ENCODE measurements at regions of chr3 and their contacts with region 1.

Region 1: DNA sequence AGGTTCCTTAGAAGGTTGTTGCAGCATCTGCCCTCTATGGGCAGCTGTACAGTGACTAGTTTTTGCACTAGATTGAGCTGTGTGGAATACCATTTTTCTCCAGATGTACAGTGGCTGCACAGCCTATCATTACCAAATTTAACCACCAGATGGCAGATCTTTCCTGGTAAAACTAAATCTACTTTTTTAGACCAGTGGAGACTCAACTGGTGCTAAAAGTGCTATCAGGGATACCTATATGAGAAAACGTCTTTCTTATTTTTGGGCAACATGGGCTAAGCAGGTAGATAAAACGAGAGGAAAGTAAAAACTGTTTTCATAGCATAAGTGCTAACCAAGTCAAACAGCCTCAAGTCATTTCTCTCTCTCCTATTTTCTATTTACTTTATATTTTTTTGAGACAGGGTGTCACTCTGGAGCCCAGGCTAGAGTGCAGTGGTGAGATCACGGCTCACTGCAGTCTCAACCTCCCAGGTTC is 21.2 kb downstream of the IGSF10 start:
- DNase-seq: no peak
- H3K4me3 ChIP-seq: no peak overlapping the region
- H3K27ac ChIP-seq: no peak overlapping the region
- H3K4me1 ChIP-seq: peaks cover 0 to 4% (median 0%) of the 10 kb centered on the region in 4 experiments; a peak in 1 of 7 replicates
- H3K27me3 ChIP-seq: no peaks in the 10 kb centered on the region
- CTCF ChIP-seq: peak in 2 of 3 experiments; percentile 58 to 66; a peak in 3 of 4 replicates
- EP300 ChIP-seq: no peak
- POLR2A ChIP-seq: no peak
- RAD21 ChIP-seq: peak; percentile 82 to 83

Region 2: GRCh38 chr3:151425627-151426335 is 13.9 kb before region 1 on chr3:
- CTCF ChIA-PET with region 1: interaction called, 48 read pairs
- POLR2A ChIA-PET with region 1: no interaction called
- DNase-seq: no peak
- H3K4me3 ChIP-seq: no peak overlapping the region
- H3K27ac ChIP-seq: no peak overlapping the region
- H3K4me1 ChIP-seq: peaks cover 0 to 11% (median 7%) of the 10 kb centered on the region in 4 experiments; a peak in 4 of 7 replicates
- H3K27me3 ChIP-seq: no peaks in the 10 kb centered on the region
- CTCF ChIP-seq: no peak; a peak in 1 of 4 replicates
- EP300 ChIP-seq: no peak
- POLR2A ChIP-seq: no peak
- RAD21 ChIP-seq: no peak

Region 3: DNA sequence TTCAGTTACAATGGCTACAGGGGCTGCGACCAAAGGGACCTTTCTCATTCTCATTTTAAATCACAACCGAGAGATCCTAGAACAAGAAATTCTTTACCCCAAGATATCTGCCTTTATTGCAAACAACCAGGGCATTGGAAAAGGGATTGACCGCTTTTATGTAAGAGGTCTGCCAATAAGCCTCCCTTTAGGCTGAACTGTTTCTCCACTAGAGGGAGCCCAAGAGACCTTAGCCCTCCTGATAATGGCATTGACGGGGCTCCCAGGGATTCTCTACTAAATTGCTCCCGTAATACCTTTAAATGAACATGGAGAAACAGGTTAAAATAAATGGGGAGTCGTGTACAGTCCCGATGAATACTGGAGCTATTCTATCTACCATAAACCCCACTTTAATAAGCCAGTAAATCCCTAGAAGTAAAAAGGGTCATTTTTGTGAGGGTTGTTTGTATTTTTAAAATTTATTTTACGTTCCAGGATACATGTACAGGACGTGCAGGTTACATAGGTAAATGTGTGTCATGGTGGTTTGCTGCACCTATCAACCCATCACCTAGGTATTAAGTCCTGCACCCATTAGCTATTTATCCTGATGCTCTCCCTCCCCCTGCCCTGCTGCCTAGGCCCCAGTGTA is 28.7 kb after region 1 on chr3:
- CTCF ChIA-PET with region 1: interaction called, 23 read pairs
- POLR2A ChIA-PET with region 1: no interaction called
- DNase-seq: peak; percentile 36 to 58
- H3K4me3 ChIP-seq: no peak overlapping the region
- H3K27ac ChIP-seq: no peak overlapping the region
- H3K4me1 ChIP-seq: no peaks in the 10 kb centered on the region
- H3K27me3 ChIP-seq: no peaks in the 10 kb centered on the region
- CTCF ChIP-seq: peak; percentile 36 to 81 (median 68)
- EP300 ChIP-seq: no peak
- POLR2A ChIP-seq: no peak
- RAD21 ChIP-seq: peak; percentile 79 to 83

Region 4: DNA sequence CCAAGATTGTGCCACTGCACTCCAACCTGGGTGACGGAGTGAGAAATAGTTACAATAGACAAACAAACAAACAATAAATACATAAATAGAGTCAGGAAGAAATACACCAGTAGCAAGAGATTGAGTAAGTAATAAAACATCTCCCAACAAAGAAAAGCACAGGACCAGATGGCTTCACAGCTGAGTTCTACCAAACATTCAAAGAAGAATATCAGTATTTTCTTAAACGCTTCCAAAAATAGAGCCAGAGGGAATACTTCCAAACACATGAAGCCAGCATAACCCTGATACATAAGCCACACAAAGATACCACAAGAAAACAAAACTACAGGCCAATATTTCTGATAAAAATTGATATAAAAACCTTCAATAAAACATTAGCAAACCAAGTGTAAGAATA is 51.8 kb after region 1 on chr3:
- CTCF ChIA-PET with region 1: no interaction called
- POLR2A ChIA-PET with region 1: no interaction called
- DNase-seq: no peak
- H3K4me3 ChIP-seq: no peak overlapping the region
- H3K27ac ChIP-seq: no peak overlapping the region
- H3K4me1 ChIP-seq: no peaks in the 10 kb centered on the region
- H3K27me3 ChIP-seq: no peaks in the 10 kb centered on the region
- CTCF ChIP-seq: no peak
- EP300 ChIP-seq: no peak
- POLR2A ChIP-seq: no peak
- RAD21 ChIP-seq: no peak

Region 5: DNA sequence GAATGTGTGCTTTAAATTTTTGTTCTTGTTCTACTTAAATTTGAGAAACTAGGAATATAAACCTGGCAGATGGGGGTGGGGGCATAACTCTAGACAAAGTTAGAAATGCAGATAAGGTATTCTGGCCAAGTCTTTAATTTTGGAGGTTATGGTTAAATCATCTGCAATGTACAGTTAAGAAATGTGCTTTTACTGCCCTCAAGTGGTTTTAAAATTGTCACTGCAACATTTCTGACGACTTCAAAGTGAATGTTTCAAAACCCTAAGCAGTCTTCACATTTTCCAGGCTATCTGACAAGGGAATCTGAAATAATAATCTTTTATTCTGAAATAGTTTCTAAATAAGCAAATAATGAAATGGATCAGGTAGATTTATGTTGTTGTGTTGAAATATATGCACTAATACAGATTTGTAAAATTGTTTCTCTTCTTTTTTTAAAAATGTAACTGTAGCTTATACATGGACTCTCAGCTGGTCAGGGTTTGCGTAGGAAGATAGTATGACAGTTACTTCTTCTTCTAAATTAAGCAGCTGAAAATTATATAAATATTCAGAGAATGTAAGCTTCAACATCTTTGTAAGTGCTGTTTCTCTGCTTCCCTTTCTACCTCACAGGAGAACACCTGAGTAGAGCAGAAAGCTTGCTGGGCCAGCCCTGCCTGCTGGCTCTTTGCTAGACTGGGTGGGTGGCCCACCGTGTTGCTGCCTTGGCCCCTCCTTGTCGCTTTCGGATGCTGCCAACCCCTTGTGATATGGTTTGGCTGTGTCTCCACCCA is 478.8 kb after region 1 on chr3:
- CTCF ChIA-PET with region 1: interaction called, 11 read pairs
- POLR2A ChIA-PET with region 1: no interaction called
- DNase-seq: no peak
- H3K4me3 ChIP-seq: no peak overlapping the region
- H3K27ac ChIP-seq: no peak overlapping the region
- H3K4me1 ChIP-seq: no peaks in the 10 kb centered on the region
- H3K27me3 ChIP-seq: no peaks in the 10 kb centered on the region
- CTCF ChIP-seq: peak in 2 of 3 experiments; percentile 35 to 48; a peak in 2 of 4 replicates
- EP300 ChIP-seq: no peak
- POLR2A ChIP-seq: no peak
- RAD21 ChIP-seq: peak; percentile 69 to 76

Measured in H1 (cell line).